Activated CD4-positive, alpha-beta T cell treated with anti-CD3 and anti-CD28 coated beads, Interleukin-2, amount 10 ng/mL, durations not matched to agents 24 days and 14 days (primary cell): ENCODE measurements at regions of chr13 and their contacts with region 1.

Region 1: DNA sequence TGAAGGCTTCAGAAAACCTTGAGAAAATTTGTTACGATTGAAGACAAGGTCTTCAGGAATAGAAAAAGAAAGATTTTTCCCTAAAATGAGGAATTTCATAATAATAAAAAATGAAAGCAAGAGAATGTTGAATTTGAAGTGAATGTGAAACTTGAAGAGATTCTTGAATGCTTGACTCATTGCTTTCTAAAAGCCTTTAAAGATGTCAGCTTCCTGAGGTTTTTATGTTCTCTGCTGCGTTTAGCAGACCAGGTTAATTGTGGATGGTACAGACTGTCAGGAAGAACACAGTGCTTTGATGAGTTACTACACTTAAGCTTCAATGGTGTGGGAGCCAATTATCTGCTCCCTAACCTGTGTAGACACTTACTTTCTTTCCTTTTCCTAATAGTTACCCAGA is 96.3 kb upstream of the FNDC3A start:
- DNase-seq: no peak
- H3K4me3 Mint-ChIP-seq: peak overlapping the region; percentile 24
- H3K27ac Mint-ChIP-seq: peak overlapping the region; percentile 1
- H3K4me1 Mint-ChIP-seq: peaks cover 40% of the 10 kb centered on the region
- H3K27me3 Mint-ChIP-seq: peaks cover 16% of the 10 kb centered on the region

Region 2: GRCh38 chr13:48532506-48533499 is 346.6 kb before region 1 on chr13 and contains the start of gene RCBTB2:
- intact Hi-C with region 1: loop called (anchors 1 kb)
- DNase-seq: peak; percentile 100
- H3K4me3 Mint-ChIP-seq: peak within 1 kb of the TSS; percentile 87
- H3K27ac Mint-ChIP-seq: peak within 1 kb of the TSS; percentile 96
- H3K4me1 Mint-ChIP-seq: peaks cover 26% of the 10 kb centered on the region
- H3K27me3 Mint-ChIP-seq: peaks cover 15% of the 10 kb centered on the region
- total RNA-seq, gene RCBTB2: 1.6 and 1.7 TPM in 2 replicates

Region 3: DNA sequence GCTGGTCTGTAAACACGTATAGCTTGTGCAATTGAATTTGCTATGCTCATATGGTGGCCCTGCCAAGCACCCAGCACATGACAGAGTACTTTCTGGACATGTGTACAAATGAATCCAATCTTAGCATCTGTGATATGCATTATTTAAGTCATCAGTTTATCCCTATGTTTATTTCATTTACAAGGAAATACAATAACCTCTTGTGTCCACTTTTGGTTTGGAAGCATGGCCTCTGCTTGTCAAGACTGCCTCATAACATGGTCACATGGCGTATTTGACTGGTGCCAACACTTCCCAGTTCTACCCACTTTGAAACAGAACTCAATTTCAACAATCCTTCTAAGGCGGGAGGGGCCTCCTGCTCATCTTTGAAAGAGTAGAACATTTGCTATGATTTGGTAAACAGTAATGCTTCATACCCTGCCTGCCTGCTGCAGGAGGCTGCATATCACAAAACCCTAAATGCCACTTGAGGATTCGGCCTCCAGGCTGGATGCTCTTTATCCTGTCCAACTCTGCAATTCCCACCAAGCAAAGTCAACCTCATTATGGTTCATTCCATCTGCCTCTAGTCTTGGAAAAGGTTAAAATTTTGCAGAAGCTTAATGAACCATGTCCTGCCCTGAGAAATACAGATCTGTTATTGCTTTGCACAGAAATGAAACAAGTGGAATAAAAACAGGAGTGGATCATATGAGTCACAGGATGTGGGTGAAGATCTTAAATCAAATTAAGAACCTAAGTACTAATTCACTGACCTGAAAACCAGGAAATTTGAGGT is 74.4 kb before region 1 on chr13:
- intact Hi-C with region 1: loop called (anchors 1 kb)
- DNase-seq: peak; percentile 61
- H3K4me3 Mint-ChIP-seq: peak overlapping the region; percentile 49
- H3K27ac Mint-ChIP-seq: peak overlapping the region; percentile 55
- H3K4me1 Mint-ChIP-seq: peaks cover 21% of the 10 kb centered on the region
- H3K27me3 Mint-ChIP-seq: no peaks in the 10 kb centered on the region

Region 4: GRCh38 chr13:48828962-48829421 is 50.4 kb before region 1 on chr13:
- intact Hi-C with region 1: loop called (anchors 1 kb)
- DNase-seq: no peak
- H3K4me3 Mint-ChIP-seq: no peak overlapping the region
- H3K27ac Mint-ChIP-seq: no peak overlapping the region
- H3K4me1 Mint-ChIP-seq: peaks cover 17% of the 10 kb centered on the region
- H3K27me3 Mint-ChIP-seq: no peaks in the 10 kb centered on the region

Region 5: DNA sequence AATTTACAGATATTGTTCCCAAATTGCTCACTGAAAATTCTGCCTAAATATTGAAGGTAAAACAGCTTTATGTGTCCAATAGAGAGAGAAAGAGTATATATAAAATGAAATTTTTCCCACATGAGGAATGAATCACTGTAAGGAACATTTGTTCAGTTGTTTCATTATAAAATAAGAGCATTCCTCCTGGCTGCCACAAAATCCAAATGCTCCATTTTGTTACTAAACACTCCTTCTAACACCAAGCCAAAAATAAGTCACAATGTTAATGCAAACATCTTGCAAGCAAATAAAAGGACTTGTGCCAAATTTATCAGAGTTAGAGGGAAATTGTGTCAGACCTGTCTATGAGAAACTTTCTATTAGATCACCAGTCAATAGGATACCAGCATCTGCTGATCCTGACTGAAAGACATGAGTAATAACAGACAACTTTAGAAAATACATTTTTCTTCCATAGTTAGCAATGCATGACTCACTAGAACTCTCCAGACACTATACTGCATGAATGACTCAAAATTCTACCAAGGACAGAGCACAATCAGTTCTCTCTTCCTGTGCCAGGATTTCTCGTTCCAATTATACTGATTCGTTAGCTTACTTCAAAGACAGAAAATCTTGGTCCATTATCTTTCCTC is 12.7 kb after region 1 on chr13:
- intact Hi-C with region 1: loop called (anchors 1 kb)
- DNase-seq: no peak
- H3K4me3 Mint-ChIP-seq: peak overlapping the region; percentile 20
- H3K27ac Mint-ChIP-seq: peak overlapping the region; percentile 70
- H3K4me1 Mint-ChIP-seq: peaks cover 19% of the 10 kb centered on the region
- H3K27me3 Mint-ChIP-seq: no peaks in the 10 kb centered on the region

Region 6: GRCh38 chr13:49110122-49110912 is 230.9 kb after region 1 on chr13:
- intact Hi-C with region 1: loop called (anchors 5 kb)
- DNase-seq: peak; percentile 93
- H3K4me3 Mint-ChIP-seq: peak overlapping the region; percentile 81
- H3K27ac Mint-ChIP-seq: peak overlapping the region; percentile 68
- H3K4me1 Mint-ChIP-seq: peaks cover 19% of the 10 kb centered on the region
- H3K27me3 Mint-ChIP-seq: no peaks in the 10 kb centered on the region

Region 7: GRCh38 chr13:50284540-50284939 is 1405.1 kb after region 1 on chr13:
- intact Hi-C with region 1: no loop called
- DNase-seq: no peak
- H3K4me3 Mint-ChIP-seq: no peak overlapping the region
- H3K27ac Mint-ChIP-seq: no peak overlapping the region
- H3K4me1 Mint-ChIP-seq: peaks cover 13% of the 10 kb centered on the region
- H3K27me3 Mint-ChIP-seq: peaks cover 33% of the 10 kb centered on the region